B cell (primary cell): ENCODE measurements at regions of chr16 and their contacts with region 1.

Region 1: DNA sequence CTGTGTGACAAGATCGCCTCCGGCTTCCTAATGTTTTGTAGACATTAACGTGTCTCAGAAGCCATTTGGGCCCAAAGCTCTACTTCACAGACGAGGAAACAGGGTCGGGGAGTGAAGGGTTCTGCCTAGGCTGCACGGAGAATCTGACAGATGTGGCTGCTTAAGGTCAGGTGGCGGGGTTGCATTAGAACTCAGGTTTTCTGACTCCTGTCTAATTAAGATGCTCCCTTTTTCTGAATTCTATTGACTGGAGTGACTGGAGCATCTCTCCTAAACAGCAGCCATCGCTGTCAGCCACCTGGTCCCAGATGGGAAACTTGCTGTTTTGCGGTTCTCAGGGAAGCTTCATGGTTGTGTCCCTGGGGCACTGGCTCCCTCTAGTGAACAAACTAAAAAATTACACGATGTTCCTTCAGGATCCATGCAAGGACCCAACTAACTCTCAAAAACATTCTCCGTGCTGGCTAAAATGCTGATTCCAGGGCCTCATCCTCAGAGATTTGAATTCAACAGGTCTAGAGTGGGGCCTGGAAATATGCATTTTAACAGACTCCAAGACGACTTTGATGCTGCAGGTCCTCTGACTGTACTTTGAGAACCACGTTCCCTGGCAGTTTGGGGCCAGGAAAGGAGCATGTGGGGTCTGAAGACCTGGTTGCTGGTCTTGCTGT is 117.4 kb downstream of the IRF8 start:
- DNase-seq: peak; percentile 83
- ATAC-seq: peak; percentile 61
- H3K4me3 ChIP-seq: no peak overlapping the region
- H3K4me3 Mint-ChIP-seq: no peak overlapping the region
- H3K27ac ChIP-seq: no peak overlapping the region
- H3K27ac Mint-ChIP-seq: peak overlapping the region; percentile 43
- H3K4me1 ChIP-seq: peaks cover 32 to 40% of the 10 kb centered on the region in 2 donors
- H3K4me1 Mint-ChIP-seq: peaks cover 35% of the 10 kb centered on the region
- H3K27me3 ChIP-seq: peaks cover 0 to 28% (median 5%) of the 10 kb centered on the region in 4 experiments
- H3K27me3 Mint-ChIP-seq: peaks cover 8% of the 10 kb centered on the region
- CTCF ChIP-seq: peak; percentile 87

Region 2: GRCh38 chr16:85697431-85697830 is 318.9 kb before region 1 on chr16:
- CTCF ChIA-PET with region 1: no interaction called
- POLR2A ChIA-PET with region 1: no interaction called
- intact Hi-C with region 1: no loop called
- DNase-seq: no peak
- ATAC-seq: no peak
- H3K4me3 ChIP-seq: no peak overlapping the region
- H3K4me3 Mint-ChIP-seq: no peak overlapping the region
- H3K27ac ChIP-seq: no peak overlapping the region
- H3K27ac Mint-ChIP-seq: no peak overlapping the region
- H3K4me1 ChIP-seq: no peaks in the 10 kb centered on the region
- H3K4me1 Mint-ChIP-seq: no peaks in the 10 kb centered on the region
- H3K27me3 ChIP-seq: no peaks in the 10 kb centered on the region
- H3K27me3 Mint-ChIP-seq: peaks cover 3% of the 10 kb centered on the region
- CTCF ChIP-seq: no peak

Region 3: GRCh38 chr16:85812031-85812793 is 204.1 kb before region 1 on chr16:
- CTCF ChIA-PET with region 1: interaction called, 370 read pairs
- POLR2A ChIA-PET with region 1: no interaction called
- intact Hi-C with region 1: no loop called
- DNase-seq: no peak
- ATAC-seq: no peak
- H3K4me3 ChIP-seq: no peak overlapping the region
- H3K4me3 Mint-ChIP-seq: no peak overlapping the region
- H3K27ac ChIP-seq: no peak overlapping the region
- H3K27ac Mint-ChIP-seq: no peak overlapping the region
- H3K4me1 ChIP-seq: no peaks in the 10 kb centered on the region
- H3K4me1 Mint-ChIP-seq: no peaks in the 10 kb centered on the region
- H3K27me3 ChIP-seq: peaks cover 0 to 20% (median 3%) of the 10 kb centered on the region in 4 experiments
- H3K27me3 Mint-ChIP-seq: peaks cover 26% of the 10 kb centered on the region
- CTCF ChIP-seq: no peak

Region 4: DNA sequence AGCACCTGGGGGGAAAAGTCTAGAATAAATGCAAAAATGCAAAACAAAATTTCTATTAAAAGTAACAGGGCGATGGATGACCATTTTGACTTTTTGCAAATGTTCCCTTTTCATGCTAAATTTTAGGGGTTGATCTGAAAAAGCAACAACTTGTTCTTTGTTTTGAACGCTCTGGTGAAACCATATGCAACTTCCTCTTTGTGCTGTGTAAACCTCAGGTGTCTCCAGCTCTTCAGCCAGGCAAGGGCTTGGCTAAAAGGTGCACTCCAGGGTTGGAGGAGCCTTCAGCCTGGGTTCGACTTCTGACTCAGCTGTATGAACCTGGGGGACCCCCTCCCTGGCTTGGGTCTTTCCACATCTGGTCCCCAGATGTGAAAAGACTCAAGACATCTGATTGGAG is 107.9 kb before region 1 on chr16:
- CTCF ChIA-PET with region 1: interaction called, 46 read pairs
- POLR2A ChIA-PET with region 1: no interaction called
- intact Hi-C with region 1: loop called (anchors 2 kb)
- DNase-seq: peak; percentile 85
- ATAC-seq: peak; percentile 62
- H3K4me3 ChIP-seq: peak overlapping the region in 4 of 5 experiments; percentile 1 to 50 (median 13)
- H3K4me3 Mint-ChIP-seq: peak overlapping the region; percentile 75
- H3K27ac ChIP-seq: peak overlapping the region; percentile 80 to 82
- H3K27ac Mint-ChIP-seq: peak overlapping the region; percentile 92
- H3K4me1 ChIP-seq: peaks cover 97 to 100% of the 10 kb centered on the region in 2 donors
- H3K4me1 Mint-ChIP-seq: peaks cover 95% of the 10 kb centered on the region
- H3K27me3 ChIP-seq: no peaks in the 10 kb centered on the region
- H3K27me3 Mint-ChIP-seq: no peaks in the 10 kb centered on the region
- CTCF ChIP-seq: no peak

Region 5: DNA sequence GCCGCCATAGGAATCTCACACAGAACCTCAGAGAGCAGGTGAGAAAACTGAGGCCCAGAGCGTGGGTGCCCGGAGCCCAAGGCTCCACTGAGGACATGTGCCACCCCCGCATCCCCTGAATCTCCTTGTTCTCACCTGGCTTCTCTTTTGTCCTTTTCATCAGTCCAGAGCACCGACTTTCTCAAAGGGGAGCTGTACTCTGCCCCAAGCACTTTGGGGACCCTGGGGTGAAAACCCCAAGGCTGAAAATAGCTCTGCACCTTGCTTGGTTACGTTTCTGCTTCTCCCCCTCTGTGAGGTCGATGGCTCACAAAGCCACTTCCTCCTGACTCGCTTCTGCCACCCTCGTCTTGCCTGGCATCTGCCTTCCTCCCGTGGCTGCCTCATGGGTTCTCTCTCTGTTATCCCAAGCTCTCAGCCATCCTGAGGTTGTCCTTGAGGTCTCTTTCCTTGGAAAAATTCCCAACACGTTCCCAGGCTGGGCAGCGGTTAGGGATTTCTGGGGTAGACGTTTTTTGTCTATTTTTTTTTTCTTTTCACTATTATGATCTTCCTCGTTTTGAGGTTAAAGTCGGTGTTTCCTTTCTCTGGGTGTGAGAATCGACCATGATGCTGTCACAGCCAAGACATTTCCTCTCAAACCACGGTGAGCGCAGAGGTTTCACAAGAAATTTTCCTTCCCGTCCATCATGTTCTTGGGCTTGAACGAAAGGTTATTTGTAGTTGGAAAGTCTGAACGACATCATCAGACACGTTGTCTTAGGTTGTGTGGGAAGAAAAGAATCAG is 80.2 kb before region 1 on chr16:
- CTCF ChIA-PET with region 1: interaction called, 7 read pairs
- POLR2A ChIA-PET with region 1: no interaction called
- intact Hi-C with region 1: loop called (anchors 5 kb)
- DNase-seq: peak; percentile 92
- ATAC-seq: peak; percentile 80
- H3K4me3 ChIP-seq: peak overlapping the region in 4 of 5 experiments; percentile 47 to 63 (median 55)
- H3K4me3 Mint-ChIP-seq: peak overlapping the region; percentile 81
- H3K27ac ChIP-seq: peak overlapping the region; percentile 96 to 98
- H3K27ac Mint-ChIP-seq: peak overlapping the region; percentile 94
- H3K4me1 ChIP-seq: peaks cover 76 to 85% of the 10 kb centered on the region in 2 donors
- H3K4me1 Mint-ChIP-seq: peaks cover 84% of the 10 kb centered on the region
- H3K27me3 ChIP-seq: no peaks in the 10 kb centered on the region
- H3K27me3 Mint-ChIP-seq: no peaks in the 10 kb centered on the region
- CTCF ChIP-seq: no peak

Region 6: GRCh38 chr16:85995541-85996423 is 20.6 kb before region 1 on chr16:
- CTCF ChIA-PET with region 1: interaction called, 67 read pairs
- POLR2A ChIA-PET with region 1: interaction called, 3 read pairs
- intact Hi-C with region 1: loop called (anchors 2 kb)
- DNase-seq: peak; percentile 78
- ATAC-seq: peak; percentile 51
- H3K4me3 ChIP-seq: peak overlapping the region in 4 of 5 experiments; percentile 6 to 58 (median 42)
- H3K4me3 Mint-ChIP-seq: peak overlapping the region; percentile 86
- H3K27ac ChIP-seq: peak overlapping the region; percentile 67 to 75
- H3K27ac Mint-ChIP-seq: peak overlapping the region; percentile 97
- H3K4me1 ChIP-seq: peaks cover 72 to 91% of the 10 kb centered on the region in 2 donors
- H3K4me1 Mint-ChIP-seq: peaks cover 75% of the 10 kb centered on the region
- H3K27me3 ChIP-seq: no peaks in the 10 kb centered on the region
- H3K27me3 Mint-ChIP-seq: no peaks in the 10 kb centered on the region
- CTCF ChIP-seq: no peak

Region 7: GRCh38 chr16:86002178-86002900 is 14.0 kb before region 1 on chr16:
- CTCF ChIA-PET with region 1: interaction called, 11 read pairs
- POLR2A ChIA-PET with region 1: interaction called, 11 read pairs
- intact Hi-C with region 1: loop called (anchors 1 kb)
- DNase-seq: peak; percentile 55
- ATAC-seq: peak; percentile 80
- H3K4me3 ChIP-seq: peak overlapping the region in 1 of 5 experiments; percentile 14
- H3K4me3 Mint-ChIP-seq: peak overlapping the region; percentile 73
- H3K27ac ChIP-seq: peak overlapping the region; percentile 28 to 61
- H3K27ac Mint-ChIP-seq: peak overlapping the region; percentile 96
- H3K4me1 ChIP-seq: peaks cover 51 to 58% of the 10 kb centered on the region in 2 donors
- H3K4me1 Mint-ChIP-seq: peaks cover 57% of the 10 kb centered on the region
- H3K27me3 ChIP-seq: no peaks in the 10 kb centered on the region
- H3K27me3 Mint-ChIP-seq: no peaks in the 10 kb centered on the region
- CTCF ChIP-seq: no peak